ENCODE measurements at regions of chr3 and their contacts with region 1.

Region 1: DNA sequence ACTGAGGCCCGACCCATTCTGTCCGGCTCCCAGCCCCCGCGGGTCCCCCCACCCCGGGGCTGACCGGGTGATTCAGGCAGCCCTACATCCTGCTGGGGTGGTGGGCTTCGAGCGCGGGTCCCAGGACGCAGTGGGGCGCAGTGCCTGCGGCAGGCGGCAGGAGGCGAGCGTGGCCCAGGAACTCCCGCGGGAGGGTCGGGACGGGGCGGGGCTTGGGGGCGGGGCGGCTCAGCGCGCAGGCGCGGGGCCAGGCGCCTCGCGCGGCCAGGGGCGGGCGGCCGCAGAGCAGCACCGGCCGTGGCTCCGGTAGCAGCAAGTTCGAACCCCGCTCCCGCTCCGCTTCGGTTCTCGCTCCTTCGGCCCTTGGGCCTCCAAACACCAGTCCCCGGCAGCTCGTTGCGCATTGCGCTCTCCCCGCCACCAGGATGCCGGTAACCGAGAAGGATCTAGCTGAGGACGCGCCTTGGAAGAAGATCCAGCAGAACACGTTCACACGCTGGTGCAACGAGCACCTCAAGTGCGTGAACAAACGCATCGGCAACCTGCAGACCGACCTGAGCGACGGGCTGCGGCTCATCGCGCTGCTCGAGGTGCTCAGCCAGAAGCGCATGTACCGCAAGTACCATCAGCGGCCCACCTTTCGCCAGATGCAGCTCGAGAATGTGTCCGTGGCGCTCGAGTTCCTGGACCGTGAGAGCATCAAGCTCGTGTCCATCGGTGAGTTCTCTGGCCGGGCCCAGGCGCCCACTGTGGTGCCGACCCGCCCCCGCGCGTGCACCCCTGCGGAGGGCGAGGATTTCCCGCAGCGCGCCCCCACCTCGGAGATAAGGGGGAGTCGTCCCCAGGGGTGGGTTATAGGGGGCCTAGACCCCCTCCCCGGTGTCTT is at the start of gene FLNB:
- DNase-seq: peak; percentile 64 to 94 (median 76)
- ATAC-seq: peak; percentile 82
- H3K4me3 ChIP-seq: peak within 1 kb of the TSS; percentile 99
- H3K4me3 Mint-ChIP-seq: peak within 1 kb of the TSS; percentile 84
- H3K27ac ChIP-seq: peak within 1 kb of the TSS in 1 of 2 donors; percentile 30
- H3K27ac Mint-ChIP-seq: peak within 1 kb of the TSS; percentile 77
- H3K4me1 ChIP-seq: peaks cover 49% of the 10 kb centered on the region
- H3K4me1 Mint-ChIP-seq: peaks cover 44% of the 10 kb centered on the region
- H3K27me3 ChIP-seq: no peaks in the 10 kb centered on the region
- H3K27me3 Mint-ChIP-seq: no peaks in the 10 kb centered on the region
- CTCF ChIP-seq: peak; percentile 67
- total RNA-seq, gene FLNB: 39.7 to 42.1 TPM

Region 2: DNA sequence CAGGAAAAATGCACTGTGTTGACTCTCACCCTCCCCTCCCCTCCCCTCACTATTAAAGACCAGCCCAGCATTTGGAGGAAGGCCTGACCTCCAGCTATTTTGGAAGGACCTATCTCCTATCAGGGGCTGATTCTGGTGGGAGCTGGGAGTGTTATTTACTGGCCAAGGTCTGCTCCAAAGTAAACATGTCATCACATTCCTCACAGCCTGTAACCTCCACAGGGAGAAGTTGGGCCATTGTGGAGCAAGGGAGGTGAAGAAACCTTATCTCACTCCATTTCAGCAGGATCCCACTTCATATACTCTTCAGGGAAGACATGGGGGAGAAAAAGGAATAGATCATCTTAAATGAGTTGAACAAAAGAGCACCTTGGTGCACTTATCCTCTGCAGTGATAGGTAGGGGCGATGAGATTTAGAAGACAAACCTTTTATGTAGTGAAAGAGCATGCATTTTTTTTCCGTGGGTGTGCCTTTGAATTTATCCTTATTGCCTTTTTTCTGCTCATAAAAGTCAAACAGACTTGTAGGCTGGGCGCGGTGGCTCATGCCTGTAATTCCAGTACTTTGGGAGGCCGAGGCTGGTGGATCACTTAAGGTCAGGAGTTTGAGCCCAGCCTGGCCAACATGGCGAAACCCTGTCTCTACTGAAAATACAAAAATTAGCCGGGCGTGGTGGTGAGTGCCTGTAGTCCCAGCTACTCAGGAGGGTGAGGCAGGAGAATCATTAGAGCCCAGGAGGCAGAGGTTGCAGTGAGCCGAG is 15.8 kb before region 1 on chr3:
- CTCF ChIA-PET with region 1: no interaction called
- POLR2A ChIA-PET with region 1: no interaction called
- intact Hi-C with region 1: no loop called
- DNase-seq: no peak
- ATAC-seq: no peak
- H3K4me3 ChIP-seq: no peak overlapping the region
- H3K4me3 Mint-ChIP-seq: no peak overlapping the region
- H3K27ac ChIP-seq: no peak overlapping the region
- H3K27ac Mint-ChIP-seq: no peak overlapping the region
- H3K4me1 ChIP-seq: no peaks in the 10 kb centered on the region
- H3K4me1 Mint-ChIP-seq: no peaks in the 10 kb centered on the region
- H3K27me3 ChIP-seq: no peaks in the 10 kb centered on the region
- H3K27me3 Mint-ChIP-seq: no peaks in the 10 kb centered on the region
- CTCF ChIP-seq: no peak

Region 3: GRCh38 chr3:58082047-58082446 is 73.7 kb after region 1 on chr3:
- CTCF ChIA-PET with region 1: no interaction called
- POLR2A ChIA-PET with region 1: interaction called, 22 read pairs
- intact Hi-C with region 1: loop called in 1 of 2 experiments (anchors 2 kb)
- DNase-seq: peak in 11 of 14 experiments; percentile 3 to 61 (median 35)
- ATAC-seq: peak; percentile 85
- H3K4me3 ChIP-seq: no peak overlapping the region
- H3K4me3 Mint-ChIP-seq: peak overlapping the region; percentile 74
- H3K27ac ChIP-seq: peak overlapping the region; percentile 2 to 38
- H3K27ac Mint-ChIP-seq: peak overlapping the region; percentile 85
- H3K4me1 ChIP-seq: peaks cover 32% of the 10 kb centered on the region
- H3K4me1 Mint-ChIP-seq: peaks cover 62% of the 10 kb centered on the region
- H3K27me3 ChIP-seq: no peaks in the 10 kb centered on the region
- H3K27me3 Mint-ChIP-seq: no peaks in the 10 kb centered on the region
- CTCF ChIP-seq: no peak

Region 4: DNA sequence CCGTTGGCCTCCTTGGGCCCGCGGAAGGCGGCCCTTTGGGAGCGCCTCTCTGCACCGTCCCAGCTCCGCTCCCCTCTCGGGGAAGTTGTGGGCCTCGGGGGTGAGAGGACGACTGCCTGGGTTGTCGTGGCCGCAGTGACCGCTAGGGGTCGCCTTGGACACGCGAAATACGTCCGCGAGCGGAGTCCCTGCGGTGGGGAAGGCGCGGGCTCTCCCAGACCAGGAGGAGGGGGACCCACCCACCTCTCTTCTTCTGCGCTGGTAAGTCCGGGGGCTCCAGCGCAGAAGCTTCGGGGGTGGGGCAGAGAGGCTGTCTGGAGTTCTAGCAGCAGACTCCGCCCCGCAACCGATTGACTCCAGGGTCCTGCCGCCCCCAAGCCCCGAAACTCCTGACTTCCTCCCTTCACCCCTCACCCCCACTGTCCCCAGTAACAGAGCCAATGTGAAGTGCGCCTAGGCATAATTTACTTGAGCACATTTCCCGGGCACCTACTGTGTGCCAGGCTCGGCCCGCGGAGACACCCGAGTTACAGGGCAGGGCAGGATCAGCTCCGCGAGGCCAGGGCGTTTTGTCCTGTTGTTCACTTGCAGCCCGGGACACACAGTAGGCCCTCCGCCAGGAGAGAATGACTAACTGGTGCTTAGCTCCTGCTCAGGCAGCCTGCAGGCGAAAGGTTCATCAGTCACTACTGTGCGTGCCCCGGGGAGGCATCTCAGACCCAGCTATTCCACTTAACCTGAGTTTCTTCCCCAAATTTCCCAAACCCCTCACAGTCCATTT is 169.6 kb after region 1 on chr3:
- CTCF ChIA-PET with region 1: interaction called, 5 read pairs
- POLR2A ChIA-PET with region 1: interaction called, 3 read pairs
- intact Hi-C with region 1: loop called (anchors 2 kb)
- DNase-seq: peak; percentile 80 to 95 (median 88)
- ATAC-seq: peak; percentile 89
- H3K4me3 ChIP-seq: peak overlapping the region; percentile 60
- H3K4me3 Mint-ChIP-seq: peak overlapping the region; percentile 62
- H3K27ac ChIP-seq: no peak overlapping the region
- H3K27ac Mint-ChIP-seq: no peak overlapping the region
- H3K4me1 ChIP-seq: peaks cover 19% of the 10 kb centered on the region
- H3K4me1 Mint-ChIP-seq: peaks cover 13% of the 10 kb centered on the region
- H3K27me3 ChIP-seq: peaks cover 0 to 5% of the 10 kb centered on the region in 2 experiments
- H3K27me3 Mint-ChIP-seq: no peaks in the 10 kb centered on the region
- CTCF ChIP-seq: peak; percentile 96

Region 5: GRCh38 chr3:58237238-58237940 is 229.0 kb after region 1 on chr3 and contains the start of gene ABHD6:
- CTCF ChIA-PET with region 1: no interaction called
- POLR2A ChIA-PET with region 1: interaction called, 4 read pairs
- intact Hi-C with region 1: loop called in 1 of 2 experiments (anchors 5 kb)
- DNase-seq: peak; percentile 64 to 89 (median 79)
- ATAC-seq: peak; percentile 88
- H3K4me3 ChIP-seq: peak within 1 kb of the TSS; percentile 95
- H3K4me3 Mint-ChIP-seq: peak within 1 kb of the TSS; percentile 96
- H3K27ac ChIP-seq: peak within 1 kb of the TSS; percentile 24 to 57
- H3K27ac Mint-ChIP-seq: peak within 1 kb of the TSS; percentile 61
- H3K4me1 ChIP-seq: peaks cover 19% of the 10 kb centered on the region
- H3K4me1 Mint-ChIP-seq: peaks cover 14% of the 10 kb centered on the region
- H3K27me3 ChIP-seq: peaks cover 0 to 3% of the 10 kb centered on the region in 2 experiments
- H3K27me3 Mint-ChIP-seq: peaks cover 18% of the 10 kb centered on the region
- CTCF ChIP-seq: peak; percentile 16
- total RNA-seq, gene ABHD6: 0.71 to 1.9 TPM

Region 6: GRCh38 chr3:58419780-58420507 is 411.6 kb after region 1 on chr3:
- CTCF ChIA-PET with region 1: no interaction called
- POLR2A ChIA-PET with region 1: no interaction called
- intact Hi-C with region 1: loop called in 1 of 2 experiments (anchors 10 kb)
- DNase-seq: no peak
- ATAC-seq: no peak
- H3K4me3 ChIP-seq: no peak overlapping the region
- H3K4me3 Mint-ChIP-seq: no peak overlapping the region
- H3K27ac ChIP-seq: no peak overlapping the region
- H3K27ac Mint-ChIP-seq: peak overlapping the region; percentile 38
- H3K4me1 ChIP-seq: no peaks in the 10 kb centered on the region
- H3K4me1 Mint-ChIP-seq: no peaks in the 10 kb centered on the region
- H3K27me3 ChIP-seq: no peaks in the 10 kb centered on the region
- H3K27me3 Mint-ChIP-seq: no peaks in the 10 kb centered on the region
- CTCF ChIP-seq: no peak